Gastrocnemius medialis (tissue), 4 donors: ENCODE measurements at regions of chr6 and their contacts with region 1.

Region 1: GRCh38 chr6:18503593-18504231 is 116.6 kb downstream of the RNF144B start:
- DNase-seq: peak; percentile 49 to 64
- ATAC-seq: peak; percentile 87 to 95
- H3K4me3 ChIP-seq: peak overlapping the region; percentile 37 to 78 (median 52)
- H3K27ac ChIP-seq: peak overlapping the region; percentile 69 to 86 (median 73)
- H3K4me1 ChIP-seq: peaks cover 3 to 6% of the 10 kb centered on the region in 2 donors
- H3K27me3 ChIP-seq: no peaks in the 10 kb centered on the region
- CTCF ChIP-seq: peak; percentile 86 to 94 (median 91)
- POLR2A ChIP-seq: no peak

Region 2: DNA sequence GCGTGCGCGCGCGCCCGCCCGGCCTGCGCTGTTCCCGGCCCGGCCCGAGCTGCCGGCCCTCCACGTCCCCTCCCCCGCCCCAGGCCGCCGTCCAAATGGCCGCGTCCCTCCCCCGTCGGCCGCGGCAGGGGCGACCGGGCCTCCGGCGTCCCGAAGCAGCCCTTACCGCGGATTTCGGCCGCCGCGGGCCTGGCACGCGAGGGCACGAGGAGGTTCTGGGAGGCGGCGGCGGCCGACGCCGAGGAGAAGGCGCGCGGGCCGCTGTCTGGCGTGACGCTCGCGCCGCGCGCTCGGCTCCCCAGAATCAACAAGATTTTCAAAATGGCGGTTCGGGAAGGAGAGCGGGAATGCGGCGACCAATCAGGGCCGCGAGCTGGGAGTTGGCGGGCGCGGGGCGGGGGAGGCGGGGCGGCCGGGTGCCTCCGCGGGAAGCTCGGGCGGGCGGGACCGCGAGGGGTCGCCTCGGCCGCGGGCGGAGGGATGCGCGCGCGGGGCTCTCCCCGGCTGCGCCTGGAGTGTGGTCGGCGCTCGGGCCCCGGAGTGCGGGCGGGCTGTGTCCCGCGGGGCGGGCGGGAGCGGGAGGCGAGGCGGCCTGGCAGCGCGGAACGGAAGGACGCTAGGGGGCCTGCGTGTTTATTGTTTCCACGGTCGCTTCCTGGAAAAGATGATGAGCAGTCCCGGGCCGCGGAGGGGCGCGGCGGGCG is 239.3 kb before region 1 on chr6 and contains the start of gene DEK:
- in situ Hi-C with region 1: no loop called
- intact Hi-C with region 1: loop called (anchors 5 kb)
- DNase-seq: peak; percentile 80 to 83
- ATAC-seq: peak; percentile 90 to 92
- H3K4me3 ChIP-seq: peak within 1 kb of the TSS; percentile 76 to 98 (median 90)
- H3K27ac ChIP-seq: peak within 1 kb of the TSS; percentile 86 to 100 (median 96)
- H3K4me1 ChIP-seq: peaks cover 34 to 38% of the 10 kb centered on the region in 2 donors
- H3K27me3 ChIP-seq: no peaks in the 10 kb centered on the region
- CTCF ChIP-seq: peak; percentile 51 to 83 (median 60)
- POLR2A ChIP-seq: peak; percentile 54 to 58
- total RNA-seq, gene DEK: 60.5 to 134 (median 105) TPM

Region 3: DNA sequence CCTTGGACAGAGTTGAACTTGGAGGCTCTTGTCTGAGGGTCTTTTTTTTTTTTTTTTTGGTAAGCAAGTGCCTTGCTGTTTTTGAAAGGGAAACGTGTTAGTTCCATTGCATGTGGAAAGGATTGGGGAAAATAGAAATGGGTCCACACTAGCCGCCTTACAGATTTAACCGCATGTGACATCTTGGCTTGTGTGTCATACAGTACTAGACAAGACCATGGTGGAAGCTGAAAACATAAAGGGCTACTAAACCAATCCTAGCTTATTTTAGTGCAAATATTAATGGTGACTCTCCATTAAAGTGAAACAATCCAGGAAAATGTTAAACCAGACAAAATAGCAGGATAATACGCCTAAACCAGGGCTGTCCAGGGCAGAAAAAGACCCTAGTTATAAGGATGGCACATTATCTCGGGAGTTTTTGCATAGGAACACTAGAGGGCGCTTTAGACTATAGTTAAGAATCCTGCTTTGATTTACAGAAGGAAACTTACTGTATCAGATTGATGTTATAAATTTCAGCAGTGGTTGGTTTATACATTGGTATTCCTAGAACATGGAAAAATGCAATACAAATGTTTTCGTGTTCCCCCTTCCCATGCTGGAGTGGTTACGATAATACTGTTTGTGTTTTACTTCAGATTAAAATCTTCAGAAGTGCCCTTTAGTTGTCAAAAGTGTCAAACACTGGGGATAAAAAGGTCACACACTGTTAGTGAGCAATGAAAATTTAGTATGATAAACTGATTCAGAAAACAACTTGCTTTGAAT is 179.6 kb before region 1 on chr6:
- in situ Hi-C with region 1: loop called in 3 of 4 experiments (anchors 5 kb)
- intact Hi-C with region 1: loop called (anchors 1 kb)
- DNase-seq: no peak
- ATAC-seq: peak; percentile 62 to 83
- H3K4me3 ChIP-seq: no peak overlapping the region
- H3K27ac ChIP-seq: no peak overlapping the region
- H3K4me1 ChIP-seq: peaks cover 15 to 22% of the 10 kb centered on the region in 2 donors
- H3K27me3 ChIP-seq: no peaks in the 10 kb centered on the region
- CTCF ChIP-seq: peak; percentile 76 to 83 (median 80)
- POLR2A ChIP-seq: no peak

Region 4: GRCh38 chr6:18335948-18336347 is 167.8 kb before region 1 on chr6:
- in situ Hi-C with region 1: loop called in 1 of 4 experiments (anchors 5 kb)
- intact Hi-C with region 1: loop called (anchors 5 kb)
- DNase-seq: no peak
- ATAC-seq: no peak
- H3K4me3 ChIP-seq: no peak overlapping the region
- H3K27ac ChIP-seq: peak overlapping the region in 2 of 4 donors; percentile 33 to 39
- H3K4me1 ChIP-seq: peaks cover 1 to 2% of the 10 kb centered on the region in 2 donors
- H3K27me3 ChIP-seq: no peaks in the 10 kb centered on the region
- CTCF ChIP-seq: no peak
- POLR2A ChIP-seq: no peak

Region 5: DNA sequence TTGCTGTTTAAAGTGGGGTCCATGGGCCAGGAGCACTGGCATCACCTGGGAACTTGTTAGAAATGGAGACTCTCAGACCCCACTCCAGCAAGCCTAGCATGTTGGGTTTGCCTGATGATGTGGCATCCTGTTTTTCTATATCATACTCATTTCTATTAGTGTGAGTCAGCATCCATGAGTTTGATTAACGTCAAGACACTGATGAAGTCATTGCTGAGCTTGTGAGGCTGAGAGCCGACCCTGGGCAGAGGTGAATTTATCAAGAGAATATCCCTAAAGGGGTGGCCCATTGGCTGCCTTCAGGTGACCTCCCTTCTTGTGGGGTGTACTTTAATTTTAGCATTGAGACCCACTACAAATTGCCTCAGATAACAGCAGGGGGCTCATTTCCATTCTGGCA is 160.0 kb before region 1 on chr6:
- in situ Hi-C with region 1: loop called in 1 of 4 experiments (anchors 5 kb)
- intact Hi-C with region 1: loop called (anchors 5 kb)
- DNase-seq: no peak
- ATAC-seq: no peak
- H3K4me3 ChIP-seq: no peak overlapping the region
- H3K27ac ChIP-seq: peak overlapping the region; percentile 82 to 89 (median 89)
- H3K4me1 ChIP-seq: peaks cover 39 to 42% of the 10 kb centered on the region in 2 donors
- H3K27me3 ChIP-seq: no peaks in the 10 kb centered on the region
- CTCF ChIP-seq: no peak
- POLR2A ChIP-seq: no peak